AG04450 (cell line): ENCODE measurements at regions of chr5 and their contacts with region 1.

Region 1: GRCh38 chr5:38420691-38421390 is 135.6 kb downstream of the LIFR start:
- DNase-seq: peak; percentile 29
- H3K4me3 ChIP-seq: no peak overlapping the region
- H3K27ac ChIP-seq: no peak overlapping the region
- H3K27me3 ChIP-seq: peaks cover 2% of the 10 kb centered on the region
- CTCF ChIP-seq: peak; percentile 86

Region 2: GRCh38 chr5:38329132-38329715 is 91.6 kb before region 1 on chr5:
- CTCF ChIA-PET with region 1: no interaction called
- POLR2A ChIA-PET with region 1: no interaction called
- DNase-seq: no peak
- H3K4me3 ChIP-seq: no peak overlapping the region
- H3K27ac ChIP-seq: no peak overlapping the region
- H3K27me3 ChIP-seq: no peaks in the 10 kb centered on the region
- CTCF ChIP-seq: no peak

Region 3: DNA sequence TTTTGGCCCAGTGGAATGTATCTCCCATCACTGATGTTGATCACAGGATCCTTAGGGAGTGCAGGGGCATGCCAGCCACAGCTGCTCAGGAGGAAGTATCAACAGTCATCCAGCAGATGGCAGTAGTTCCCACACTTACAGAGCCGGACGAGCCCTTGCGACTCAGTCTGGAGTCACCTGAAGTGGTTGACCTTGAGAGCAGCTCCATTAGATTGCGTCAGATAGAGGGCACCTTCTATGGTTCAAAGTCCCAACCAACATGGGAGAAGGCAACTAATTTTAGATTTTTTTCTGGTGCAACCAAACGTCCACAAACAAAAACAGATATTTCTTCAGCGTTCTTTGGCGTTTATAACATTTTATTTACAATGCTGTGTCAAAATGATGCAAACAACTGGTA is 37.9 kb before region 1 on chr5:
- CTCF ChIA-PET with region 1: interaction called, 18 read pairs
- POLR2A ChIA-PET with region 1: no interaction called
- DNase-seq: peak; percentile 46
- H3K4me3 ChIP-seq: no peak overlapping the region
- H3K27ac ChIP-seq: no peak overlapping the region
- H3K27me3 ChIP-seq: peaks cover 25% of the 10 kb centered on the region
- CTCF ChIP-seq: peak; percentile 86

Region 4: DNA sequence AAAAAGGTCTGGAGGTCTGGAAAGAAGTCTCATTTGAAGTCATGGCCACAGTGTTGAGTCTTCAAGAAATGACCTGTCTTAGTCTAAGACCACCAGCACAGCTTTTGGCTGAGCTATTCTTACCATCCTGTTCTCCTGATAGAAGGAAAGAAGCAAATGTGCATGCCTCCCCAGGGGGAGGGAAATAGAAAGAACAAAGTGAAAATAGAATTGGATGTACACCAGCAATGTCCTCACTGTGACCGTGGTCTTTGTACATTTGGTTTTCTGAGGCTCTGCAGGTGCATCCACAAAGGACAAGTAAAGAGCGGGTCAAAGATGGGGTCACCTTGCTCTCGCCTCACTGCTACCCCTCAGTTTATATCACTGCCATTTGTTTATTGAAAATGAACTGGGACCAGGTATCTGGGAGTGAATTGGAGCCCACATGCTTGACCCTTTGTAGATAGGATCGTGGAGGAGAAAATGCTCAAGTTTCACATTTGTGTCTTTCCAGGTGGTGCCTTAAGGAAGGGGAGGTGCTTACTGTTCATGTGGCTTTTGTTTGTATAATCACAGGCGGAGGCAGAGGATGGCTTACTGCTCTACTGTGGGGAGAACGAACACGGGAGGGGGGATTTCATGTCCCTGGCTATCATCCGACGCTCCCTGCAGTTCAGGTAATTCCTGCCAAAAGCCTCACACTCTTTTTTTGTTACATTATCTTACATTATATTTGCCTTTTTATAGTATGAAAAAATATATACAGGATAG is 12.2 kb before region 1 on chr5:
- CTCF ChIA-PET with region 1: interaction called, 17 read pairs
- POLR2A ChIA-PET with region 1: no interaction called
- DNase-seq: no peak
- H3K4me3 ChIP-seq: no peak overlapping the region
- H3K27ac ChIP-seq: no peak overlapping the region
- H3K27me3 ChIP-seq: peaks cover 28% of the 10 kb centered on the region
- CTCF ChIP-seq: no peak

Region 5: DNA sequence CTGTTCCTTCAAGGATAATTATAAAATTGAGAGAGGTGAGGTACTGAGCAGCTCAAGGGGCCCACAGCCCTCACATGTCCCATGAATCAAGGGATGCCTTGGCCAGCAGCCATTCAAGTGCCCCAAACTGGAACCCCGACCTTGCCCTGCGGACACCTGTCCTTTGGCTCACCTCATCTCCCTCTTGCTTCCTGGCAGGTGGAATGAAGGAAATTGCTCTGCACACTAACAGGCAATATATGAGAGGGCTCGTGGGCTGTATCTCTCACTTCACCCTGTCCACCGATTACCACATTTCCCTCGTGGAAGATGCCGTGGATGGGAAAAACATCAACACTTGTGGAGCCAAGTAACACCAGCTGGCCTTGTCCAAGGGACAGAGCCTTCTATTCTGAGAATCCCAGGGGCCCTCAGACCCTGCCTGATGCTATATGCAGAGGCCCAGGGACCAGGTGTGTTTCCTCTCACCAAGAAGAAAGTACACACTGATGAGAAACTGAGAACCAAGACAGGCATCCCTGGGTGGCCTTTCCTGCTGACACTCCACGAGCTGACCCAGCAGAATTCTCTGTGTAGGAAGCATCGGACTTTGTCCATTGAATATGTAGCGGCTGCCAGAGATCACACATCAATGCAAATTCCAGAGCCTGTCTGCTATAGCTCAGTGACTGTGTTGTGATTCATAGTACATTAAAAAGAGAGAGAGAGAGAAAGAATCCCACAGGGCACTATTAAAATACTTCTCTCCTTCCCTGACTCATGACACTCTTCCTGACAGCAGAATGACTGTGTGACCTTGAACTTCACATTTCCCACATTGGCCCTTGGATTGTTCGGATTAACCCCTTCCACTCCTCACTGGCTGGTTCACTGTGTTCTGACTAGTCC is 43.0 kb after region 1 on chr5:
- CTCF ChIA-PET with region 1: interaction called, 10 read pairs
- POLR2A ChIA-PET with region 1: no interaction called
- DNase-seq: peak; percentile 59
- H3K4me3 ChIP-seq: no peak overlapping the region
- H3K27ac ChIP-seq: peak overlapping the region; percentile 77
- H3K27me3 ChIP-seq: no peaks in the 10 kb centered on the region
- CTCF ChIP-seq: no peak

Region 6: DNA sequence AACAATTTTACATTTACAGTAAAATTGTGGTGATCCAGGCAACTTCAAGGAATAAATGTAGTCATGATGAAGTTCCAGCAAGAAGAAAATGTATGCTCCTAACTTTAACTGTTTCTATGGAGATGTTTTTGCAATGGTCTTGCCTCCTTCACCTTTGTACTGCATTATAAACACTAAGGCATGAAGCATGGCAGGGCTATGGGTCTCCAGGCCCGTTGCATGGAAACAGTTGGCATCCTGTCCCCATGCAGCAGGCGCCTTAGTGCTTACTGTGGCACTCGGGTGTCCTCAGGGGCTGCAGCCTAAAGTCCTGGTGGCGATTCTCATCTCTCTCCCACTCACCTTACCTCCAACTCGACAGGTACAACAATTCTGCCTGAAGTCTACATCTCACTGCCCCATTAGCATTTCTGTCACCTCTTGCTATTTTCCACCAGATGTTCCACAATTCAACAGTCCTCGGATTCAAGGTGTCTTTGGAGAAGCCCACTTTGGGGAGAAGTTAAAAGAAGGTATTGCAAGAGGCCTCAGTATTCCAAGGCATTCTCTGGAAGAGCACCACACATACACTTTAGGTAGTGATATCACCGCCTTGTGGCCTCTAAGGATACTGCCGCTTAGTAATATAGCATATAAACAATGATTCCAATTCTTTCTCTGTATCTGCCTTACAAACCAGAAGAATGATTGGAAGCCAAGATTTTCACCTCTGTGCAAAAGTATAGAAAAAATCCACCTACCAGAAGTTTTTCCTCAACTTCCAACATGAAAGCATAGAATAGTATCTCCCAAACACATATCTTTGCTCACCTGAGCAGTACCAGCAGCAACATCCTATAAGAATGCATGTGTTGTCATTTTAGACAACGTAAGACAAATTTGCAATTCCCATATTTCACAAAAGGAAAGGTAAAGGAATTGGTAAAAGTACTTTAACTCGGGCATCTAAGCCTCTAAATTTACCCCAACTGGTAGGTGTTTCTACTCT is 130.5 kb after region 1 on chr5:
- CTCF ChIA-PET with region 1: interaction called, 12 read pairs
- POLR2A ChIA-PET with region 1: no interaction called
- DNase-seq: peak; percentile 27
- H3K4me3 ChIP-seq: no peak overlapping the region
- H3K27ac ChIP-seq: no peak overlapping the region
- H3K27me3 ChIP-seq: no peaks in the 10 kb centered on the region
- CTCF ChIP-seq: peak; percentile 81